ENCODE measurements at regions of chr7 and their contacts with region 1.

Region 1: DNA sequence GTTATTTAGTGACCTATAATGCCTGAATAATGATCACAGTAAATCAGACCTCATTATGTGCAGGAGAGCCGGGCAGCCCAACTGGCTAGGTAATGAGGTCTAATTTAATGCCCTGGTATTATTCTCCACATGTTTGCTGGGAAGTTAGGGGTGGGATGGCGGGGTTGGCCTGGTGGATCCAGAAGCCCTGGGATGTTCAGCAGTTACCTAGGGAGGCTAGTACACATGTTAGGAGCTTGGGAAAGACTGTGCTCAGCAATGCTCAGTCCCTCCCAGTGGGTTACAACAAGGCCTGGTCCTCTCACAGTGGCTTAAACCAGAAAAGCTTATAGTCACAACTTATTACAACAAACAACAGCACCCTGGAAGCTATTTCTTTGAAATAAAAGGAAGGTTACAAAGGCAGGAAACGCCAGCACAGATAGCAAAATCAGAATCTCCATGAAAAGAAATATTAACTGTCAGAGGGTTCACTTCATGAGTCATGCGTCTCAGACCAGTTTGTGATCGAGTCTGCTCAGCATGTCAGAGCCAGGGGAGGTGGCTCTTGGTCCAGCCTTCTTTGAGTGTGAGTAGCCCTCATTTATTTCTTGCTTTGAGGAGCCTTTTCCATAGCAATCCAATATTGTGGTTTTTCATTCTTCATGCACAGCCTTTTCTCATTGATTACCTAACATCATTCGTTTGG is 418.6 kb upstream of the NPVF start:
- DNase-seq: no peak
- H3K4me3 ChIP-seq: no peak overlapping the region
- H3K27ac ChIP-seq: no peak overlapping the region
- H3K4me1 ChIP-seq: no peaks in the 10 kb centered on the region
- H3K27me3 ChIP-seq: no peaks in the 10 kb centered on the region
- CTCF ChIP-seq: no peak
- POLR2A ChIP-seq: no peak

Region 2: GRCh38 chr7:25707768-25708620 is 61.1 kb after region 1 on chr7:
- CTCF ChIA-PET with region 1: no interaction called
- POLR2A ChIA-PET with region 1: no interaction called
- dilution Hi-C with region 1: no loop called
- intact Hi-C with region 1: loop called (anchors 2 kb)
- DNase-seq: no peak
- H3K4me3 ChIP-seq: no peak overlapping the region
- H3K27ac ChIP-seq: no peak overlapping the region
- H3K4me1 ChIP-seq: no peaks in the 10 kb centered on the region
- H3K27me3 ChIP-seq: no peaks in the 10 kb centered on the region
- CTCF ChIP-seq: no peak
- POLR2A ChIP-seq: no peak